Cardiac septum (tissue), 1 donor: ENCODE measurements at regions of chr10 and their contacts with region 1.

Region 1: GRCh38 chr10:84147347-84147746 is 8.0 kb downstream of the GHITM start:
- DNase-seq: no peak

Region 2: GRCh38 chr10:84194424-84195040 is 47.2 kb after region 1 on chr10 and contains the start of gene CDHR1:
- intact Hi-C with region 1: loop called (anchors 5 kb)
- DNase-seq: no peak
- total RNA-seq, gene CDHR1: 1.3 TPM